ENCODE measurements at regions of chr3 and their contacts with region 1.

Region 1: DNA sequence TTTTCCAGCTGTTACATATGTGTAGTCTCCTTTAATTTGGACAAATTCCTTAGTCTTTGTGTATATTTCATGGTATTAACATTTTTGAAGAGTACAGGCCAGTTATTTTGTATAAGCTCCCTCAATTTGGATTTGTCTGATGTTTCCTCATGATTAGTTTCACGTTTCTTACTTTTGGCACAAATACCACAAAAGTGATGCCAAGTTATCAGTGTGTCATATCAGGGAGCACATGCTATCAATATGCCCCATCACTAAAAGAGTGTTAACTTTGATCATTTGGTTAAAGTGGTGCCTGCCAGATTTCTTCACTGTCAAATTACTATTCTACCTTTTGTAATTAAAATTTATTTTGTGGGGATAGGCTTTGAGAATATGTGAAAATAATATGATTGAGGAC is 14.6 kb downstream of the PCNP start:
- DNase-seq: no peak
- ATAC-seq: no peak
- H3K4me3 ChIP-seq: no peak overlapping the region
- H3K27ac ChIP-seq: no peak overlapping the region
- H3K4me1 ChIP-seq: no peaks in the 10 kb centered on the region
- H3K27me3 ChIP-seq: no peaks in the 10 kb centered on the region
- CTCF ChIP-seq: no peak

Region 2: GRCh38 chr3:101061312-101061711 is 527.3 kb before region 1 on chr3:
- intact Hi-C with region 1: no loop called
- DNase-seq: no peak
- ATAC-seq: no peak
- H3K4me3 ChIP-seq: no peak overlapping the region
- H3K27ac ChIP-seq: no peak overlapping the region
- H3K4me1 ChIP-seq: no peaks in the 10 kb centered on the region
- H3K27me3 ChIP-seq: no peaks in the 10 kb centered on the region
- CTCF ChIP-seq: no peak

Region 3: GRCh38 chr3:101676765-101677435 is 88.3 kb after region 1 on chr3 and contains the start of gene ZBTB11:
- intact Hi-C with region 1: loop called in 1 of 2 experiments (anchors 5 kb)
- DNase-seq: peak; percentile 100
- ATAC-seq: peak; percentile 88 to 89 (median 89)
- H3K4me3 ChIP-seq: peak within 1 kb of the TSS; percentile 84
- H3K27ac ChIP-seq: peak within 1 kb of the TSS; percentile 97
- H3K4me1 ChIP-seq: peaks cover 20% of the 10 kb centered on the region
- H3K27me3 ChIP-seq: no peaks in the 10 kb centered on the region
- CTCF ChIP-seq: peak; percentile 30
- total RNA-seq, gene ZBTB11: 10.3 to 12.6 (median 11.6) TPM

Measured in psoas muscle (tissue), 8 donors.